Activated CD8-positive, alpha-beta T cell treated with anti-CD3 and anti-CD28 coated beads, Interleukin-2, amount 10 ng/mL, durations not matched to agents 7 days and 5 days (primary cell): ENCODE measurements at regions of chr3 and their contacts with region 1.

Region 1: DNA sequence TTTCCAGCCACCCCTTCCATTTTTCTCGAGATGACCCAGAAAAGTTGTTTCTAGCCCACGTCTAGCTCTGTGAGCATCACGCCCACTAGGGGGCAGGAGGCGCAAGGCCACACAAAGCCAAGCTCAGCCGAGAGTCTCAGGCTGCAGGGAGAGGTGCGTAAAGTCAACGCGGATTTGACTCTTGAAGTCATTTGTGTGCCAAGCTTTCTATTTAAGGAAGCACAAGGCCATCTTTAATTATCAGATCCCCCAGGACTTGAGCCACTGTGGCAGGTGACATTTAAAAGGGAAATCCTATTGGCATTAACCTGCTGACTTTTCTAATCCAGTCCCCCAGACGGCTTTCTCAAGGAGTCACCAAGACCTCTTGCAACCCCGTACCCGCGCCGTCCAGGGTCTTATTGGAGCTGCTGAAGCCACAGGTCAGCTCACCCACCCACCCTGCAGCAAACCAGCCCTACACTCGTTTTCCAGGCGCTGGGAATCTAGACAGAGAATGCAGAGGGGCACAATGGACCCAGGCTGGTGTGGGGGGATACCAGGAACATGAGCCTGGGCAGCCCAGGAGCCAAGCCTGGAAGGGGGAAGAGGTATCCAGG is 62.1 kb downstream of the CAPN7 start:
- DNase-seq: peak; percentile 89
- ATAC-seq: peak; percentile 67
- H3K4me3 Mint-ChIP-seq: no peak overlapping the region
- H3K27ac Mint-ChIP-seq: no peak overlapping the region
- H3K4me1 Mint-ChIP-seq: peaks cover 54% of the 10 kb centered on the region
- H3K27me3 Mint-ChIP-seq: peaks cover 2% of the 10 kb centered on the region

Region 2: GRCh38 chr3:14472471-14473351 is 795.4 kb before region 1 on chr3:
- CTCF ChIA-PET with region 1: no interaction called
- POLR2A ChIA-PET with region 1: no interaction called
- DNase-seq: no peak
- ATAC-seq: no peak
- H3K4me3 Mint-ChIP-seq: no peak overlapping the region
- H3K27ac Mint-ChIP-seq: no peak overlapping the region
- H3K4me1 Mint-ChIP-seq: peaks cover 3% of the 10 kb centered on the region
- H3K27me3 Mint-ChIP-seq: no peaks in the 10 kb centered on the region

Region 3: GRCh38 chr3:15108082-15108545 is 160.0 kb before region 1 on chr3:
- CTCF ChIA-PET with region 1: interaction called, 13 read pairs
- POLR2A ChIA-PET with region 1: no interaction called
- DNase-seq: peak; percentile 81
- ATAC-seq: peak; percentile 94
- H3K4me3 Mint-ChIP-seq: no peak overlapping the region
- H3K27ac Mint-ChIP-seq: no peak overlapping the region
- H3K4me1 Mint-ChIP-seq: peaks cover 2% of the 10 kb centered on the region
- H3K27me3 Mint-ChIP-seq: peaks cover 7% of the 10 kb centered on the region

Region 4: DNA sequence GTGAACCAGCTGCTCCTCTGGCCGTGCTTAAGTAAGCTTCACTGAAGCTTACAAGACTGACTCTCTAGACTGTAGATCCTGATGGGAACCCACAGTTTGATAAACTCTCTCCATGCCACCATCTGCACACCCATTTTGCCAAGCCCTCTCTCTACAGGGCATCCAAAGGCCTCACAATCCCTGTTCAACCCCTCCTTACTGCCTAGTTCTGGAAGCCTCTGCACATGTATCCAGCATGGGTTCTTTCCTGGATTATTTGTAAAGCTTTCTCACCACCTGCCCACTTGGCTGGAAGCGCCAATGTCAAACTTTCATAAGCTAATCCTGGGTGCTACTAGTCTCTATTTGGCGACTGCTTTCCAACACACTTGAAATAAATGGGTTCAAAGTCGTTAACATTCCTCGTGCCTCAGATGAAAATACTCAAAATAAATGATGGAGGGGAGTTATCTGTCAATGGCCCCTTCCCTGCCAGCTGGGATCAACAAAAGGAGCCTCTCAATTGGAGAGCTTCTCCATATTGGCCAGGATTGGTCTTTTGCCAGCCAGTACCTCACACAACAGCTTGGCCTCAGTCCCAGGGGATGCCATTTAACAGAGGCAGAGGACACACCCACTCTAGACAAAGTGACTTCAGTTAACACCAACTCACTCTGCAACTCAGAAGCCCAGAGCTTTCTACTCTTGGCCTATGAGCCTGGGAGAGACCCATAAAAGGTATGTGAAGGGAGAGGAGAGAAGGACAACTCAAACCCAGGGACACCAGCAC is 16.2 kb after region 1 on chr3:
- CTCF ChIA-PET with region 1: interaction called, 61 read pairs
- POLR2A ChIA-PET with region 1: no interaction called
- DNase-seq: no peak
- ATAC-seq: no peak
- H3K4me3 Mint-ChIP-seq: no peak overlapping the region
- H3K27ac Mint-ChIP-seq: no peak overlapping the region
- H3K4me1 Mint-ChIP-seq: peaks cover 12% of the 10 kb centered on the region
- H3K27me3 Mint-ChIP-seq: peaks cover 24% of the 10 kb centered on the region

Region 5: DNA sequence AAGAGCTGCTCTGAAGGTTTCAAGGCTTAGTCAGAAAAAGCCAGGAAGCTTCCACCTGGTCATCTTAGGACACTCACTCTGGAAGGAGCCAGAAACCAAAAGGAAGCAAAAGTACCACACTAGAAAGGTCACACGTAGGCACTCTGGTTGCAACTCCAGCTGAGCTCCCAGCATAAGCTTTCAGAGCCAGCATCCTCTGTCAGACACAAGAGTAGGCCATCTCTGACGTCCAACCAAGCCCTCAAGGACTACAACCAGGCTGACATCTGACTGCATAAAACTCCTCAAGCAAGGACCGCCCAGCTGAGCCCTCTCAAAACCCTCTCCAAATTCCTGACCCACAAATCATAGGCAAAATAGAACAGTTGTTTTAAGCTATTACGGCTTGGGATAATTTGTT is 51.4 kb after region 1 on chr3:
- CTCF ChIA-PET with region 1: interaction called, 15 read pairs
- POLR2A ChIA-PET with region 1: no interaction called
- DNase-seq: no peak
- ATAC-seq: no peak
- H3K4me3 Mint-ChIP-seq: no peak overlapping the region
- H3K27ac Mint-ChIP-seq: no peak overlapping the region
- H3K4me1 Mint-ChIP-seq: peaks cover 26% of the 10 kb centered on the region
- H3K27me3 Mint-ChIP-seq: no peaks in the 10 kb centered on the region

Region 6: GRCh38 chr3:15361494-15362212 is 93.5 kb after region 1 on chr3:
- CTCF ChIA-PET with region 1: interaction called, 16 read pairs
- POLR2A ChIA-PET with region 1: interaction called, 4 read pairs
- DNase-seq: peak; percentile 24
- ATAC-seq: peak; percentile 50
- H3K4me3 Mint-ChIP-seq: no peak overlapping the region
- H3K27ac Mint-ChIP-seq: no peak overlapping the region
- H3K4me1 Mint-ChIP-seq: peaks cover 29% of the 10 kb centered on the region
- H3K27me3 Mint-ChIP-seq: peaks cover 7% of the 10 kb centered on the region

Region 7: DNA sequence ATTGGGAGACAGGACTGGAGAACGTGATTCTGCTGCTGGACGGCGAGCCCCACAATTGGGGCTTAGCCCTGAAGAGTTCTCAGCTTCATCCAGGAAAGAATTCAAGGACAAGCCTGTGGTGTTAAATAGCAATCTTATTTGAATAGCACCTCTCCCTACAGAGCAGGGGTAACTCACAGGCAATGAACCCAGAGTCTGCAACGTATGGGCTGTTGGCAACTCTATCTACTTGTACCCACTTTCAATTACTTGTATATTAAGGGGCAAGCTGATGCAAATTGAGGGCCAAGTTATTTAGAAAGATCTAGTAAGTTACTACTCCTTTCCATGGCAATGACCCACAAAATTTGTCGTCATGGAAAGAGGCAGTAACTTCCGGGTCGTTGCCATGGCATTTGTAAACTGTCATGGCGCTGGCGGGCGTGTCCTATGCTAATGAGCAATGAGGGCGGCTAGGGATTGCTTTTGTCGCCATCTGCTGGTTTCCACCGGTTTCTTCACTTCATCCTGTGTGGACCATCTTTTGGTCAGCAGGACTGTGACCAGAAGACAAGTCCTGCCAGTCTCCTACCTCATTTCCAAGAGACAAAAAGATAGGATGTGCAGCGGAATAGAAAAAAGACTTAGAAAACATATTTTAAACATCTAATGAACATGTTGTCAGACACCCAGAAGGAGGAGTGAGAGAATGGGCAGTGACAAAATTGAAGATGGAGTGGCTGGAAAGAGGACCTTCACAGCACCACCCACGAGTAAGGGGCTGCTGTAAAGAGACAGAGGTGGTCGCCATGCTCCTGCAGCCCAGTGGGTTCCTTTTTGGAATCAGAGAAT is 110.0 kb after region 1 on chr3:
- CTCF ChIA-PET with region 1: interaction called, 123 read pairs
- POLR2A ChIA-PET with region 1: interaction called, 3 read pairs
- DNase-seq: peak; percentile 97
- ATAC-seq: peak; percentile 94
- H3K4me3 Mint-ChIP-seq: no peak overlapping the region
- H3K27ac Mint-ChIP-seq: peak overlapping the region; percentile 83
- H3K4me1 Mint-ChIP-seq: peaks cover 10% of the 10 kb centered on the region
- H3K27me3 Mint-ChIP-seq: peaks cover 7% of the 10 kb centered on the region

Region 8: GRCh38 chr3:15405448-15406050 is 137.4 kb after region 1 on chr3:
- CTCF ChIA-PET with region 1: interaction called, 147 read pairs
- POLR2A ChIA-PET with region 1: no interaction called
- DNase-seq: peak; percentile 52
- ATAC-seq: peak; percentile 81
- H3K4me3 Mint-ChIP-seq: no peak overlapping the region
- H3K27ac Mint-ChIP-seq: no peak overlapping the region
- H3K4me1 Mint-ChIP-seq: peaks cover 12% of the 10 kb centered on the region
- H3K27me3 Mint-ChIP-seq: peaks cover 1% of the 10 kb centered on the region

Region 9: DNA sequence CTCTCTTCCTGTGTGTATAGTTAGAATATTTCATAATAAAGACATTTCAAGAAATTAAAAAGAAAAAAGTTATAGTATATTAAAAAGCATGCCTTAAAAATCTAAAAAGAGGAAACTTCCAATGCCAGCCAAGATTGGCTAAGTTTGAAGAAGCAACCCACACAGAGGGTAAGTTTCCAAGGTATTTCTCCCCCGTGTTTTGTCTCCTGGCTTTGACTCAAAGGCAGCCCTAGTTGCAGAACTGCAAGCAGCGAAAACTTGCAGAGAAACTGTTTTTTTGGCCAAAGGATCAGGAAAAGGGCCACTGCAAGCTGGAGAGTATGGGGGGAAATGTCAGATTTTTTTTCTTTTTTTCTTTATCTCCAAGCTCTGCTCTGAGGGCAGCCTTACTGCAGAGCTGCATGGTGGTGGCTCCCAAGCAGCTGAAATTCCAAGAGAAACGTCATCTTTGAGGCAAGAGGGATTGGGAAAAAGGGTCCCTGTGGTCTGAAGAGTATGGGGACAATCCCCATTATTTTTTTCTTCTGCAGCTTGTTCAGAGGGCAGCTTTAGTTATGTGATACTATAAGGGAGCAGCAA is 310.2 kb after region 1 on chr3:
- CTCF ChIA-PET with region 1: no interaction called
- POLR2A ChIA-PET with region 1: no interaction called
- DNase-seq: no peak
- ATAC-seq: no peak
- H3K4me3 Mint-ChIP-seq: no peak overlapping the region
- H3K27ac Mint-ChIP-seq: no peak overlapping the region
- H3K4me1 Mint-ChIP-seq: no peaks in the 10 kb centered on the region
- H3K27me3 Mint-ChIP-seq: no peaks in the 10 kb centered on the region